Heart right ventricle (tissue), 16 donors: ENCODE measurements at regions of chrX and their contacts with region 1.

Region 1: DNA sequence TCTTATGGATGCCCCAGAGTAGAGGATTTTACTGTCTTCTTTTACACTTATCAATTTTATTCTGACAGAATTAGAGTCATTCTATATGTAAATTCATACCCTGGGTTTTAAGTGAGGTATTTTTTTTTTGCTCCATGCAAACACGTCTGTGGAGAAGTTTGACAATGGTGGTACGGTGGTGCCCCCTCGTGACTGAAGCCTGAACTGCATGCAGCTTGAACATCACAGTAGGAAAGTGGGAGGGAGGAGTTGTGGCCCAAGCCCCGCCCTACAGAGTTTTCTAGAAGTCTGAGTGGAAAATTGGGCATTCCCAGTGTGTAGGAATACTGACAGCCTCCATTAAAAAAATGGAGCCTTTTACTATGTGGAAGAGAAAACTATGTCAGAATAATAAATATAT is 73.3 kb upstream of the RAB40AL start:
- DNase-seq: peak; percentile 77 to 83
- ATAC-seq: peak in 7 of 8 donors; percentile 51 to 82 (median 71)
- H3K4me3 ChIP-seq: no peak overlapping the region
- H3K27ac ChIP-seq: no peak overlapping the region
- H3K4me1 ChIP-seq: no peaks in the 10 kb centered on the region
- H3K27me3 ChIP-seq: no peaks in the 10 kb centered on the region
- CTCF ChIP-seq: peak; percentile 55 to 91 (median 81)

Region 2: DNA sequence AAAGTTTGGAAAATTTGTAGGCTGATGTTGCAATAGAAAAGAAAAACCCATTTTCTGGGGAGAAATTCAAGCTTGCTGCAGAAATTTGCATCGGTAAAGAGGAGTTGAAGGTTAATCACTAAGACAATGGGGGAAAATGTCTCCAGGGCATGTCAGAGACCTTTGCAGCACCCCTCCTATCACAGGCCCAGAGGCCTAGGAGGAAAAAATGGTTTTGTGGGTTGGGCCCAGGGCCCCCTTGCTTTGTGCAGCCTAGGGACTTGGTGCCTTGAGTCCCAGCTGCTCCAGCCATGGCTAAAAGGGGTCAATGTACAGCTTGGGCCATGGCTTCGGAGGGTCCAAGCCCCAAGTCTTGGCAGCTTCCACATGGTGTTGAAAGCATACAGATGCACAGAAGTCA is 365.0 kb before region 1 on chrX:
- intact Hi-C with region 1: loop called in 2 of 10 experiments (anchors 5 to 10 kb)
- DNase-seq: no peak
- ATAC-seq: no peak
- H3K4me3 ChIP-seq: no peak overlapping the region
- H3K27ac ChIP-seq: no peak overlapping the region
- H3K4me1 ChIP-seq: no peaks in the 10 kb centered on the region
- H3K27me3 ChIP-seq: peaks cover 0 to 26% (median 0%) of the 10 kb centered on the region in 7 donors
- CTCF ChIP-seq: no peak

Region 3: GRCh38 chrX:102515975-102516941 is 347.5 kb before region 1 on chrX and contains the start of gene TMSB15A:
- intact Hi-C with region 1: loop called in 1 of 10 experiments (anchors 10 kb)
- DNase-seq: peak; percentile 63 to 67
- ATAC-seq: peak; percentile 71 to 94 (median 90)
- H3K4me3 ChIP-seq: peak within 1 kb of the TSS; percentile 2 to 58 (median 46)
- H3K27ac ChIP-seq: peak within 1 kb of the TSS in 1 of 10 donors; percentile 4
- H3K4me1 ChIP-seq: peaks cover 0 to 7% (median 0%) of the 10 kb centered on the region in 9 donors
- H3K27me3 ChIP-seq: peaks cover 0 to 76% (median 8%) of the 10 kb centered on the region in 7 donors
- CTCF ChIP-seq: no peak
- total RNA-seq, gene TMSB15A: 0.47 to 0.79 TPM in 2 of 10 donors, not detected in the others